Dendritic cell treated with granulocyte-macrophage colony-stimulating factor and Interleukin-4, amounts not matched to agents 40 ng/mL and 50 ng/mL, for 4 days (primary cell): ENCODE measurements at regions of chr22 and their contacts with region 1.

Region 1: DNA sequence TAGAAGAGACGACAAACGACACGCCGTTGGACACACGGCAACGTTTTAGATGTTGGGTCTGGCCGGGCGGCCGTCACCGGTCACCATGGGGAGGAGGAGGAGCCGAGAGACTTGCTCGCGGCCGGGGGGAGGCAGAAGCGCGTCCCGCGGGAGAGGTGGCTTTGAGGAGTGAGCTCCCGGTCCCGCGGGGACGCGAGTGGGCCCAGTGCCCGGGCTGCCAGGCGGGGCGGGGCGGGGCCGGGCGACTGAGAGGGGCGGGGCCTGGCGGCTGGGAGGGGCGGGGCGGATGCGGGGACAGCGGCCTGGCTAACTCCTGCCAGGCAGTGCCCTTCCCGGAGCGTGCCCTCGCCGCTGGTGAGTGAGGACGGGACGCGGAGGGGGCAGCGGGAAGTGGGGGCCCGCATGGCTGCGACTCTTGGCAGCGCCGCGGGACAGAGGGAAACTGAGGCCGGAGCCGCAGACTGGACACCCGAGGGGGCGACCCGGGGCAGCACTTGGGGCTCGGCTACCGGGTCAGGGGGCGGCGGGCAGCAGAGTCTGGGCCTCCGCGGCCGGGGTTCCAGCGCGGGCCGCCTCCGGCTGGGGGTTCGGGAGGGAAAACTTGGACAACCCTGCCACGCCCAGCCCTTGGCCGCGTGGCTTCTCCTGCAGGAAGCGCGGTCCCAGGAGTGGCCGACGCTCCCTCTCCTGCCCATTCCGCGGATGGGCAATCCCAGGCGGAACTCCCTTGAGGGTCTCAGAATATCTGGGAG is at the start of gene TSPO:
- H3K4me3 Mint-ChIP-seq: peak within 1 kb of the TSS; percentile 92
- H3K27ac Mint-ChIP-seq: peak within 1 kb of the TSS; percentile 88
- H3K4me1 Mint-ChIP-seq: peaks cover 65% of the 10 kb centered on the region
- H3K27me3 Mint-ChIP-seq: no peaks in the 10 kb centered on the region

Region 2: GRCh38 chr22:42978453-42979103 is 172.8 kb before region 1 on chr22:
- intact Hi-C with region 1: no loop called
- H3K4me3 Mint-ChIP-seq: peak overlapping the region; percentile 13
- H3K27ac Mint-ChIP-seq: peak overlapping the region; percentile 55
- H3K4me1 Mint-ChIP-seq: peaks cover 42% of the 10 kb centered on the region
- H3K27me3 Mint-ChIP-seq: no peaks in the 10 kb centered on the region

Region 3: GRCh38 chr22:43187171-43188099 is 36.0 kb after region 1 on chr22:
- intact Hi-C with region 1: loop called (anchors 5 kb)
- H3K4me3 Mint-ChIP-seq: peak overlapping the region; percentile 75
- H3K27ac Mint-ChIP-seq: peak overlapping the region; percentile 95
- H3K4me1 Mint-ChIP-seq: peaks cover 18% of the 10 kb centered on the region
- H3K27me3 Mint-ChIP-seq: peaks cover 3% of the 10 kb centered on the region